ENCODE measurements at regions of chr19 and their contacts with region 1.

Region 1: GRCh38 chr19:29811125-29812079 is at the start of gene CCNE1:
- DNase-seq: peak; percentile 96 to 98
- ATAC-seq: peak; percentile 97
- H3K4me3 ChIP-seq: peak within 1 kb of the TSS; percentile 76 to 89
- H3K27ac ChIP-seq: no peak within 1 kb of the TSS
- H3K4me1 ChIP-seq: no peaks in the 10 kb centered on the region
- H3K27me3 ChIP-seq: no peaks in the 10 kb centered on the region
- total RNA-seq, gene CCNE1: 0.81 to 0.88 TPM

Region 2: GRCh38 chr19:29483944-29484581 is 327.3 kb before region 1 on chr19:
- intact Hi-C with region 1: no loop called
- DNase-seq: peak; percentile 16 to 21
- ATAC-seq: no peak
- H3K4me3 ChIP-seq: no peak overlapping the region
- H3K27ac ChIP-seq: no peak overlapping the region
- H3K4me1 ChIP-seq: no peaks in the 10 kb centered on the region
- H3K27me3 ChIP-seq: no peaks in the 10 kb centered on the region

Region 3: DNA sequence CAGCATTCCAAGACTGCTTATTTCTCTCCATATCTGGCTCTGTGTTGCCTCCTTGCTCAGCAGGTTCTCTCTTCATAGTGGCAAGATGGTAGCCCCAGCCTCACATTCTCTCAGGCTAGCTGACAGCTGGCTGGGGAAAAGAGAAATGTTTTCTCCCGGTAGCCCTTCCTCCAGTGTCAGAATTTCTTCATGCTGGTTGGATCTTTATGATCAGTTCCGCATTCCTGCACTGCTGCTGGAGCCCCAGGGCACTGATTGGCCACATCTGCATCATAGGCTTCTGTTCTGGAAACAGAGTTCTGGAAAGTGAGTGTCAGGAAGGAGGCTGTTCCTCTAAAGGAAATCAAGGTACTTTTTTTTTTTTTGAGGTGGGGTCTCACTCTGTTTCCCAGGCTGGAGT is 180.7 kb before region 1 on chr19:
- intact Hi-C with region 1: no loop called
- DNase-seq: no peak
- ATAC-seq: no peak
- H3K4me3 ChIP-seq: no peak overlapping the region
- H3K27ac ChIP-seq: no peak overlapping the region
- H3K4me1 ChIP-seq: no peaks in the 10 kb centered on the region
- H3K27me3 ChIP-seq: no peaks in the 10 kb centered on the region

Region 4: GRCh38 chr19:29844891-29845572 is 33.6 kb after region 1 on chr19:
- intact Hi-C with region 1: loop called (anchors 1 to 5 kb)
- DNase-seq: peak; percentile 95 to 97
- ATAC-seq: peak; percentile 96
- H3K4me3 ChIP-seq: peak overlapping the region; percentile 68 to 98
- H3K27ac ChIP-seq: peak overlapping the region in 1 of 2 donors; percentile 54
- H3K4me1 ChIP-seq: no peaks in the 10 kb centered on the region
- H3K27me3 ChIP-seq: no peaks in the 10 kb centered on the region

Region 5: DNA sequence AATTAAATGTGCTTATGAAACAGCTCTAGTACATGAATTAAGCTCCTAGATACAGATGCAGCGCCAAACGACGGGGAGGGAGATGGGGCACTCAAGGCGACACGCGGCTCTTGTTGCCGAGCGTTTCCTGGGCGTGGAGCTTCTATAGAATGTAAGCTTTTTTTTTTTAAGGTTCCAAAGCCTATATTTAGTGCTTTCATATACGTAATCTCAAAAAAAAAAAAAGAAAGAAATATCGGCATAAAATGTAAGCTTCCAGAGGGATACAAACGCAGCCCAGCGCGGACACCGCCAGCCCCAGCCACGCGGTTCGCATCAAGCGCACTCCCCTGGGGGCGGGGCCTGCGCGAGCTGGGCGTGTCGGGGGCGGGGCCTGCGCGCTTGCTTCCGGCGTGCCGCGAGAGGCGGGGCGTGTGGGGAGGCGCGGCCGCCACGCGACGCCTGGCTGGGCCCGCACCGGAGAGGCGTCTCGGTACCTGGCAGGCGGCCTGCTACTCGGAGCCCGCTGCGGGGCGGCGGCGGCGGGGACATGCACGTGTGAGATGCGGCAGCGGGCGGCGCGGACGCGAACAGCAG is 130.5 kb after region 1 on chr19 and contains the start of gene URI1:
- intact Hi-C with region 1: loop called in 1 of 2 experiments (anchors 5 kb)
- DNase-seq: peak; percentile 93 to 98
- ATAC-seq: peak; percentile 97
- H3K4me3 ChIP-seq: peak within 1 kb of the TSS; percentile 98
- H3K27ac ChIP-seq: peak within 1 kb of the TSS in 1 of 2 donors; percentile 65
- H3K4me1 ChIP-seq: peaks cover 0 to 4% of the 10 kb centered on the region in 2 donors
- H3K27me3 ChIP-seq: peaks cover 0 to 3% of the 10 kb centered on the region in 2 donors
- total RNA-seq, gene URI1: 51.4 to 55.9 TPM